Right ventricle myocardium inferior (tissue), 1 donor: ENCODE measurements at regions of chr10 and their contacts with region 1.

Region 1: DNA sequence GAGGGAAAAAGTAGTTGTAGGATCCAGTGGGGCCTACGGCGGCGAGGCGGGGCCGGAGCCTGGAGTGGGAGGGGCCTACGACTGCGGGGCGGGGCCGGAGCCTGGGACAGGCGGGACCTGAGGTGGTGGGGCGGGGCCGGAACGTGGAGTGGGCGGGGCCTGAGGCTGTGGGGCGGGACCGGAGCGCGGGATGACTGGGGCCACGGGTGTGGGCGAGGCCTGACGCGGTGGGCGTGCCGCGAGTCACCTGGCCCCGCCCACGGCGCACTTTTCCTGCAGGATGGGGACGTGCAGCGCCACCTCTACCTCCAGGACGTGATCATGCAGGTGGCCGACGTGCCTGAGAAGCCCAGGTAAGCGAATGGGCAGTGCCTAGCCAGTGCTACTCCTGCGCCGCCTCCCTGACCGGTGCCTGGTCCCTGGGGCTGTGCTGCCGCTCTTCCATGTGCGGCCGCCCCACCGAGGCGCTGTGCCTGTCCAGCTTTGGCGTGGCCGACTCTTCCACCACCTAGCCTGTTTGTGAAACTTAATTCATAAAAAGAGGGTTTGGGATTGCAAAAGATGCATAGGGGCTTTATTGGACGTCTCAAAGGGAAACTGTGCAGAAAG is 501 bp downstream of the ZNF511 start:
- DNase-seq: peak; percentile 97
- ATAC-seq: peak; percentile 97

Region 2: DNA sequence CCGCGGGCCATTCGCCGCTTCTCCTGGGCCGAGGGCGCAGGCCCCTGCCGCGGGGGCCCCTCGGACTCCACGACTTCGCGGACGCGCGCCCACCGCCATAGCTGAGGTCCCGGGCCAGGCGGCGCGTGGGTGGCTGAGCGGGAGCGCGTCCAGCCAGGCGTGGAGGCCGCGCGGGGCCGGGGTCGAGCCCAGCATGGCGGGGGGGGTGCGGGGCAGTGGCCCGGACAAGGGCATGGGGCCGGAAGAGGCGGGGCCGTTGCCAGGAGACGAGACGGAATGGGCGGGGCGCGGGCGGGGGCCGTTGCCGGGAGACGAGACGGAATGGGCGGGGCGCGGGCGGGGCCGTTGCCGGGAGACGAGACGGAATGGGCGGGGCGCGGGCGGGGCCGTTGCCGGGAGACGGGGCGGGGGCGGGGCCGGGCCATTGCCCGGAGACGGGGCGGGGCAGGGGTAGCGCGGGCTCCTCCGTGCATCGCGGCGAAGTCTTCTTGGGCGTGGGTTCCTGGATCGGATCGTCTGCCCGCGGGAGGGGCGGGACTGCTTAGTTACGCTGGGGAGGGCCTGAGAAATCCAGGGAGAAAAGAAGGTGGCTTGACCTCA is 47.4 kb before region 1 on chr10:
- intact Hi-C with region 1: loop called (anchors 5 kb)
- DNase-seq: peak; percentile 96
- ATAC-seq: peak; percentile 86